WTC11 (cell line): ENCODE measurements at regions of chr11 and their contacts with region 1.

Region 1: DNA sequence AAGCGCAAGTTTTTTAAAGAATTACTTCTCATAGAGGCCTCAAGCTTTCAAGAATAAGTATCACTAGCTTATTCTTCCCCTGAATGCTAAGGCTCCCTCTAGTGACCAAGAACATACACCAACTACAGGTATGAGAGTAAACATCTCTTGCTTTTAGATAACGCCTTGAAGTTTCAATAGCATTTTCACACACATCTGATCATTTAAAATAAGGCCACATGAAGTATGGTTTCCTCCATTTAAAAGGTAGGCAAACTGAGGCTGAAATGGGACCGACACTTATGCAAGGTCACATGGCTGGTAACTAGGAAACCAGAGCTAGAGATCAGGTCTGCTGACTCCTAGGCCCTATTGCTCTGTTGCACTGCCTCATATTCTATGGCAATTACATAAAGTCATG is 66.5 kb downstream of the CCDC34 start:
- DNase-seq: no peak
- ATAC-seq: peak; percentile 94
- H3K4me3 Mint-ChIP-seq: no peak overlapping the region
- H3K27ac Mint-ChIP-seq: no peak overlapping the region
- H3K4me1 Mint-ChIP-seq: peaks cover 10% of the 10 kb centered on the region
- H3K27me3 Mint-ChIP-seq: peaks cover 4% of the 10 kb centered on the region; the same call in 1 of the 2 replicates
- CTCF ChIP-seq: peak; percentile 39; the same call in 1 of the 2 replicates

Region 2: GRCh38 chr11:26993965-26994457 is 302.5 kb before region 1 on chr11 and contains the start of gene FIBIN:
- CTCF ChIA-PET with region 1: no interaction called
- POLR2A ChIA-PET with region 1: no interaction called
- DNase-seq: peak; percentile 55
- ATAC-seq: peak; percentile 91
- H3K4me3 Mint-ChIP-seq: peak within 1 kb of the TSS; percentile 74
- H3K27ac Mint-ChIP-seq: peak within 1 kb of the TSS; percentile 22; the same call in 1 of the 2 replicates
- H3K4me1 Mint-ChIP-seq: peaks cover 8% of the 10 kb centered on the region
- H3K27me3 Mint-ChIP-seq: peaks cover 20% of the 10 kb centered on the region
- CTCF ChIP-seq: no peak
- total RNA-seq, gene FIBIN: 0.34 to 0.48 TPM (median 0.37 TPM) in 3 replicates

Region 3: GRCh38 chr11:27183672-27184457 is 112.6 kb before region 1 on chr11:
- CTCF ChIA-PET with region 1: interaction called, 60 read pairs
- POLR2A ChIA-PET with region 1: no interaction called
- DNase-seq: peak; percentile 43
- ATAC-seq: peak; percentile 57
- H3K4me3 Mint-ChIP-seq: no peak overlapping the region
- H3K27ac Mint-ChIP-seq: no peak overlapping the region
- H3K4me1 Mint-ChIP-seq: peaks cover 14% of the 10 kb centered on the region
- H3K27me3 Mint-ChIP-seq: no peaks in the 10 kb centered on the region
- CTCF ChIP-seq: peak; percentile 65

Region 4: DNA sequence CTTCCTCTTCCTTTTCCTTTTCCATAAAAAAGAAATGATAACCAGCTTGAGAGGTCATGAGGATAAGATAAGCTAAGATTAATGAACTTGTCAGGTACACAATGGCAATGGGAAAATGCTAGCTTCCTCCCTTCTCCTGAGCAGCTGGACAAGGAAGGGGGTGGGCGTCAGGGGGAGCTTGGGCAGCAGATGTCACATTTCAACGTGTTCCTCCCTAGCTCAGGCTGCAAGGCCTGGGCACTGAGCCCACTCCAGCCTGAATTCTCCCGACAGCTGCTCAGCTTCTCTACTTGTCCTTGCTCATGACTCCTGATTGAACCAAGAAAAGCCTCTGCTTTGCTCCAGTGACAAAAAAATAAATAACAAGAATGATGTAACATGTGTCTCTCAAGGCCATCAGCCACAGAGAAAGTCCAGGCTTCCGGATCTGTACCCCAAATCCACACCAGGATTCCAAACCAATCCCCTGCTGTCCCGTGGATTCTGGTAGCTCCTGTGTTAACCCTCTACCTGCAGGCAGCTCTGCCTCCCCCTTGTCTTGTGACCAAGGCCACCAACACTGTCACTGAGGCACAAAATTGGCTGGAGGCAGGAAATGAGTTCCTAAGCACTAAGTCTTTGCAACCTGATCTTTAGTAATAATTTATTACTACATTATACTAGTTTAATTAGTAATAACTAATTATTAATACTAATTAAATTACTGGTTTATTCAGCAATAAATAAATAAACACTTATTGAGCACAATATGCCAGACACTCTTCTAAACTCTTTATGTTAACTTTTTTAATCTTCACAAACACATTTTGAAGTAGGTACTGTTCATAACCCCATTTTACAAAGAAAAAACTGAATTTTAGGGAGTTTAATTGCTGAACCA is 80.0 kb before region 1 on chr11:
- CTCF ChIA-PET with region 1: interaction called, 15 read pairs
- POLR2A ChIA-PET with region 1: interaction called, 8 read pairs
- DNase-seq: no peak
- ATAC-seq: no peak
- H3K4me3 Mint-ChIP-seq: no peak overlapping the region
- H3K27ac Mint-ChIP-seq: no peak overlapping the region
- H3K4me1 Mint-ChIP-seq: peaks cover 59% of the 10 kb centered on the region
- H3K27me3 Mint-ChIP-seq: no peaks in the 10 kb centered on the region
- CTCF ChIP-seq: no peak

Region 5: GRCh38 chr11:27281740-27282590 is 14.5 kb before region 1 on chr11:
- CTCF ChIA-PET with region 1: interaction called, 14 read pairs
- POLR2A ChIA-PET with region 1: no interaction called
- DNase-seq: no peak
- ATAC-seq: no peak
- H3K4me3 Mint-ChIP-seq: no peak overlapping the region
- H3K27ac Mint-ChIP-seq: no peak overlapping the region
- H3K4me1 Mint-ChIP-seq: peaks cover 6% of the 10 kb centered on the region; the same call in 1 of the 2 replicates
- H3K27me3 Mint-ChIP-seq: no peaks in the 10 kb centered on the region
- CTCF ChIP-seq: no peak

Region 6: GRCh38 chr11:27315836-27316235 is 19.3 kb after region 1 on chr11:
- CTCF ChIA-PET with region 1: interaction called, 14 read pairs
- POLR2A ChIA-PET with region 1: no interaction called
- DNase-seq: no peak
- ATAC-seq: no peak
- H3K4me3 Mint-ChIP-seq: no peak overlapping the region
- H3K27ac Mint-ChIP-seq: no peak overlapping the region
- H3K4me1 Mint-ChIP-seq: peaks cover 12% of the 10 kb centered on the region
- H3K27me3 Mint-ChIP-seq: no peaks in the 10 kb centered on the region; the same call in 1 of the 2 replicates
- CTCF ChIP-seq: no peak

Region 7: DNA sequence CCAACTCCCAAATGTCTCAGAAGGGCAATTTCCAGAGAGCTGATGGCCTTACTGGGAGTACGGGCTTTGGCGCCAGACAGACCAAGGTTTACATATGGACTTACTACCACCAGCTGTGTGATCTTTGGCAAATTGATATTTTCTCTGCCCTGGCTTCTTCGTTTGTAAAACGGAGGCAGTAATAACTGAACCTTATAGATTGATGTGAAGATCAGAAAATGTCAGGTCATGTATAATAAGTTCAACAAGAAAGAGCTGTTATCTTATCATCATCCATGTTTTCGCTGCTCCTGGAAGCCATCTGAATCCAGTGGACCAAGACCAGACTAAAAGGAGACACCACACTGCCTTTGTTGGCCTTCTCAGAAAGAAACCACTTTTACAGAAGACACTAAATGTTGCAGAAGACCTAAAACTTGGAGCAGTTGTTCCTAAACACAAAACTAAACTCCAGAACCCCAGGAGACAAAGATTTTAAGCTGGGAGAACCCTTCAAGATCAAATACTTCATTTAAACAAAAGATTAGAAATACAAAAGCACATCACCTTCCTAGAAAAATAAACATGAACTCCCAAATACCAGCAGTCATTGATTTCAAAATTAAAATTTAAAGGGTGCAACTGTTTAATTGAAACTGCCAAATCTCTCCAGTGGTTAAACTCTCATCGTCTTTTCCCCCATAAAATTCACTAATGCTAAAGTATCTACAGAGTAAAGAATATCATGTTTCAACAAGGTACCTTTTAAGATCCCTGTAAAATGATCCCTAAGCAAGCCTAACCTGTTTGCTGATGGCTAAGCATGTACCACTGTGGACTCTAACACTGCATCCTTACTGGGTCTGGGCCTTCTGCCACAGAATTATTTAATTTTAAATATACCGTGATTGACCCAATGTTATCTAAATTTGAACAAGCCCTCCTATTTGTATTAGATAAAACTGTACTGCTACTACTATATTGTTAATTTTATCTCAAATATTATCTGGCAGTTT is 120.0 kb after region 1 on chr11:
- CTCF ChIA-PET with region 1: interaction called, 12 read pairs
- POLR2A ChIA-PET with region 1: no interaction called
- DNase-seq: no peak
- ATAC-seq: peak; percentile 60; the same call in 1 of the 2 replicates
- H3K4me3 Mint-ChIP-seq: no peak overlapping the region
- H3K27ac Mint-ChIP-seq: peak overlapping the region; percentile 83; the same call in 1 of the 2 replicates
- H3K4me1 Mint-ChIP-seq: peaks cover 57% of the 10 kb centered on the region
- H3K27me3 Mint-ChIP-seq: no peaks in the 10 kb centered on the region
- CTCF ChIP-seq: no peak